WTC11 (cell line): ENCODE measurements at regions of chr15 and their contacts with region 1.

Region 1: DNA sequence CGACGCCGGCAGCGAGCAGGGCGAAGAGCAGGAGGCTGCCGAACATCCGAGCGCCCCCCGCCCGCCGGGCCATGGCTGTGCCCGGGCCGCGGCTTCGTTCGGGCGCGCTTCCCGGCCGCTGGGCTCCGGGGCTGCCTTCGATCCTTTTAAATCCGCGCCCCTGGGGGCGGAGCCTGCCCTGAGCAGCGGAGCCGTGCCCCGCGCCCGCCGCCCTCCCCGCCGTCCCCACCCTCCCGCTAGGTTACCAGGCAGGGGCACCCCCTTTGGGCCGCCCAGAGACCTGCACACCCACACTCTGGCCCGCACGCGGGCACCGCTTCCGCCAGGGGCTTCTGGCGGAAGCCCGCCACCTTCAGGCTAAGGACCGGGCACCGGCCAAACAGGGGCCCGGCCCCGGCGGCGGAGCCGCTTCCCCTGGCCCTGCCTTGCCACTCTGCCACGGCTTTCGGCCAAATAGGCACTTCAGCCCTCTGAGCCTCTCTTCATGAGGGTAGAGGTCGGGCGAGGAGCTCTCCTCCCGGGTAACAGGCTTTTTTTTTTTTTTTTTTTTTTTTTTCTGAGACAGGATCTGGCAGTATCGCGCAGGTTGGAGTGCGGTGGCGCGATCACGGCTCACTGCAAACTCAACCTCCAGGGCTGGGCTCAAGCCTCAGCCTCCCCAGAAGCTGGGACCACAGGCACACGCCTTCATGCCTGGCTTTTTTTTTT is at the start of gene NMB:
- DNase-seq: peak; percentile 91
- ATAC-seq: peak; percentile 73
- H3K4me3 Mint-ChIP-seq: peak within 1 kb of the TSS; percentile 77
- H3K27ac Mint-ChIP-seq: 0 out of 2 replicates have a peak within 1 kb of the TSS, but pooled peaks have one; percentile 53
- H3K4me1 Mint-ChIP-seq: peaks cover 35% of the 10 kb centered on the region
- H3K27me3 Mint-ChIP-seq: peaks cover 21% of the 10 kb centered on the region
- CTCF ChIP-seq: peak; percentile 44; the same call in 1 of the 2 replicates
- total RNA-seq, gene NMB: 14.9 to 16.2 TPM (median 15.3 TPM) in 3 replicates

Region 2: DNA sequence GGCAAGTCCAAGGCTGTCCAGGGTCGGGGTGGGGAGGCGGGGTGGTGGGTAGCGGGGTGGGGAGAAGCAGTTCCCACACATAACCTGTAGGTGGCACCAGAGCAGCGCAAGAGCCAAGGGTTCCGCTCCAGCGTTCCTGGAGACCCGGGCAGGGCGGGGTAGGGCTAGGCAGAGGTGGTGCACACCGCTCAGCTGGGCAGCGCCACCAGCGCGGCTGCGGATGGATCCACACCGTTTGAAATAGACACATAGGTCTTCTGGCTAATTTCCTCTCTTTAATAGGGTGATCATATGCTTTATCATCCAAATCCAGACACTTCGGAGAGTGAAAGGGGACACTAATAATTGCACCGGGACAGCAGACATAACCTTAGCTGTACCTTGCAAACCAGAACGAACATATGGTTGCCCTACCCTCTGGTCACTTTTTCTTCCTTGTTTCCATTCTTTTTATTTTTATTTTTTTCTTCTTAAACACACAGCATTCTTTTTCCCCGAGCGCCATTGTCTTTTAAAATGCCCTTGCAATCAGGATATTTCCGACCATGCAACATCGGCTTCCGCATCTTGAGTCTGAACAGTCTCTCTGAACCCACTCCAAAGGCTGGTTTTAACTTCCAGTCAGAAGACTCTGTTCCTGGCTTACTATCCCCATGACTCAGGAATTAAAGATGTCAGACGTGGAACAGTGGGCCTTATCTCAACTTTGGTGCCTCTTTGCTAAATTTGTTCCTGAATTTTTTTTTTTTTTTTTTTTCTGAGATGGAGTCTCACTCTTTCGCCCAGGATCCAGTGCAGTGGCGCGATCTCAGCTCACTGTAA is 70.0 kb before region 1 on chr15:
- CTCF ChIA-PET with region 1: interaction called, 31 read pairs
- POLR2A ChIA-PET with region 1: interaction called, 5 read pairs
- DNase-seq: peak; percentile 94
- ATAC-seq: peak; percentile 99
- H3K4me3 Mint-ChIP-seq: peak overlapping the region; percentile 66
- H3K27ac Mint-ChIP-seq: no peak overlapping the region
- H3K4me1 Mint-ChIP-seq: peaks cover 22% of the 10 kb centered on the region
- H3K27me3 Mint-ChIP-seq: peaks cover 19% of the 10 kb centered on the region
- CTCF ChIP-seq: peak; percentile 93

Region 3: DNA sequence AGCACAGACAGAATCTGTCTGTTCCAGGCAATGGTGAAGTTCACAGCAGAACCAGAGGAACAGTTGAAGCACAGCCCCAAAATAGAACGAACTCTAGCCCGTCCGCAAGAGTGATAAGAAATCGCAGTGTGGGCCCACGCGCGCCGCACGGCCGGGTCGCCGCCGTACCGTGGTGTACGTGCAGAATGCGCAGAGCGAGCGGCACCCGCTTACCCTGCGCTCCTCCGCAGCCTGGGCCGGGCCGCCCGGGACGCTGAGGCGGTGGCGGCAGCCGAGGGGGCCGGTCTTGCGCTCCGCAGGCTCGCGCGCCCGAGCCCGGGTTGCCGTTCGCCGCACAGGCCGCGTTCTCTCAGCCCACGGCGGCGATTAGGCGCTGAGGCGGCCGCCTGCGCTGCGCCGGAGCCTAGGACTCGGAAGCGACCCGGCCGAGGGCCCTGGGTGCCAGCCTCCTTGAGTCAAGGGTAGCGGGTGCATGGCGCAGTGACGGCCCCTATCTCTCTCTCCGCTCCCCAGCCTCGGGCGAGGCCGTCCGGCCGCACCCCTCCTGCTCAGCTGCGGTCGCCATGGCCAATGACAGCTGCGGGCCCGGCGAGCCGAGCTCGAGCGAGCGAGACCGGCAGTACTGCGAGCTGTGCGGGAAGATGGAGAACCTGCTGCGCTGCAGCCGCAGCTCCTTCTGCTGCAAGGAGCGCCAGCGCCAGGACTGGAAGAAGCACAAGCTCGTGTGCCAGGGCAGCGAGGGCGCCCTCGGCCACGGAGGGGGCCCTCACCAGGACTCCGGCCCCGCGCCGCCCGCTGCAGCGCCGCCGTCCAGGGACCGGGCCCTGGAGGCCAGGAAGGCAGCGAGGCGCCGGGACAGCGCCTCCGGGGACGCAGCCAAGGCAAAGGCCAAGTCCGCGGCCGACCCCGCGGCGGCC is 24.7 kb before region 1 on chr15:
- CTCF ChIA-PET with region 1: interaction called, 13 read pairs
- POLR2A ChIA-PET with region 1: interaction called, 7 read pairs
- DNase-seq: peak; percentile 68
- ATAC-seq: peak; percentile 51
- H3K4me3 Mint-ChIP-seq: peak overlapping the region; percentile 90
- H3K27ac Mint-ChIP-seq: peak overlapping the region; percentile 52; the same call in 1 of the 2 replicates
- H3K4me1 Mint-ChIP-seq: peaks cover 52% of the 10 kb centered on the region
- H3K27me3 Mint-ChIP-seq: peaks cover 16% of the 10 kb centered on the region
- CTCF ChIP-seq: no peak

Region 4: DNA sequence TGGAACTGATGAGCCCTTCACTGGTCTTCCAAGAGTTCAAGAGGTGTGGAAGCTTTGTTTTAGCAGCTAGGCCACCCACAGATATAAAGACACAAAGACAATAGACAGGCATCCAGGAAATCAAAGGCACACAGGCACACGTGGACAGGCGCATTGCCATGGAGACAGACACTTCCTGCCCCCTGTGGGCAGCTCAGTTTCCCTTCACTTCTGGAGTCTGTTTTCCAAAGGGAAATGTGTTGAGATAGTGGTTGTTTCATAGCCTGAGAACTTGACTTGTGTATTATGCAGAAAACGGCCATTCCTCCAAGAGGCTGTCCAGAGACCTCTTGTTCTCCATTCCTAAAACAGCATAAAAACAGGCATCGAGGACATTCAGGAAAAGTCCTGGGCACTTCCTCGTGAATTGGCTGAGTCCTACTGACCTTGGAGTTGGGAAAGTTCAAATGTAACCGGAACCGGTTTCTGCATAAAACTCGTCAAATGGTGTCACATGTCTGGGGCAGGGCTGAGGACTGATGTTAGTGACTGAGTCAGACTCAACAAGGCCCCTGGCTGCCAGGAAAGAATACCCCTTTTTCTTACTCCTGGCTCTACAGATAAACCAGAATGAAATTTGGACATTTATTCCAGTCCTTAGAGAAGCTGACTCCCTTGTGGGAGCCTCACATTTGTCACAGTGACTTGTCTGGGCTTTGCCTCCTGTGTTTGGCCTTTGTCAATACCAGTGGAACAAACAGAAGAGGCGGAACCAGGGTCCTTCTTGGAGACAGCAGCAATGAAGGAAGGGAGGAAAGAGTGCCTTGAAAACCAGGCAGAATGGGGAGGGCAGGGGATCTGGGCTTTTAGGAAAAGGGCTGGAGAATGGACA is 160.3 kb after region 1 on chr15:
- CTCF ChIA-PET with region 1: interaction called, 4 read pairs
- POLR2A ChIA-PET with region 1: interaction called, 10 read pairs
- DNase-seq: peak; percentile 47
- ATAC-seq: peak; percentile 10
- H3K4me3 Mint-ChIP-seq: peak overlapping the region; percentile 72
- H3K27ac Mint-ChIP-seq: peak overlapping the region; percentile 91
- H3K4me1 Mint-ChIP-seq: peaks cover 43% of the 10 kb centered on the region
- H3K27me3 Mint-ChIP-seq: peaks cover 7% of the 10 kb centered on the region
- CTCF ChIP-seq: no peak

Region 5: DNA sequence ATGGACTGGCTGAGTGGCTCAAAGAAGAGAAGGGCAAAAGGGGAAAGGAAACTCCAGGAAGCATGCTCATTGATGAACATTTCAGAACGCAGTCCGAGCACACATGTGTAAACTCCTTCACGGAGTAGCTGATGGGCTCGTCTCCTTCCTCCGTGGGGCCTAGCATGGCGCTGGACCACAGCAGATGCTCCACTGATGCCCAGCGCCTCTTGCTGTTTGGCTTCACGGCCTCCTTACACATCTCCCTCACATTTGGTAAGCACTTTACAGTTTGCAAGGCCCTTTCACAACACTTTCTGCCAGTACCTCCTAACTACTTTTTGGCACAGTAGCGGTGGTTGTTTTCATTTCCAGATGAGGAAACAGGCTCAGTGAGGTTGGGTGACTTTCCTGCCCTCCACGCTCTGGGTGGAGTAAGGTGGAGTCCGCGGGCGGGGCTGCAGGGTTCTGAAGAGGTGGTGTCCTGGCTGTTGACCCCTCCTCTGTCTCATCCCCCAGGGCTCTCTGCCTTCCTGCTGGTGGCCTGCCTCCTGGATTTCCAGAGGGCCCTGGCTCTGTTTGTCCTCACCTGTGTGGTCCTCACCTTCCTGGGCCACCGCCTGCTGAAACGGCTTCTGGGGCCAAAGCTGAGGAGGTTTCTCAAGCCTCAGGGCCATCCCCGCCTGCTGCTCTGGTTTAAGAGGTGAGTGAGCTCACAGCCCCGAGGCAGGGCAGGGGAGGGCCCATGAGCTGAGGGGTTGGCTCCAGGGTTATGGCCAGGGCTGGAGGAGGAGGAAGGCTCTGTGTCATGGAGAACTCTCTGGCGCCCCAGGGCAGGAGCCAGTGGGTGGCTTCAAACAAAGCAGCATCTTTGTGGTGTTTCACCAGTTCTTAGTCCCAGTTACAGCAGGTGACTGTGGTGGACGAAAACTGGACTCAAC is 236.5 kb after region 1 on chr15:
- CTCF ChIA-PET with region 1: no interaction called
- POLR2A ChIA-PET with region 1: no interaction called
- DNase-seq: no peak
- ATAC-seq: peak; percentile 88
- H3K4me3 Mint-ChIP-seq: no peak overlapping the region
- H3K27ac Mint-ChIP-seq: no peak overlapping the region
- H3K4me1 Mint-ChIP-seq: peaks cover 2% of the 10 kb centered on the region
- H3K27me3 Mint-ChIP-seq: no peaks in the 10 kb centered on the region; the same call in 1 of the 2 replicates
- CTCF ChIP-seq: no peak